Heart left ventricle (tissue), 16 donors: ENCODE measurements at regions of chr18 and their contacts with region 1.

Region 1: DNA sequence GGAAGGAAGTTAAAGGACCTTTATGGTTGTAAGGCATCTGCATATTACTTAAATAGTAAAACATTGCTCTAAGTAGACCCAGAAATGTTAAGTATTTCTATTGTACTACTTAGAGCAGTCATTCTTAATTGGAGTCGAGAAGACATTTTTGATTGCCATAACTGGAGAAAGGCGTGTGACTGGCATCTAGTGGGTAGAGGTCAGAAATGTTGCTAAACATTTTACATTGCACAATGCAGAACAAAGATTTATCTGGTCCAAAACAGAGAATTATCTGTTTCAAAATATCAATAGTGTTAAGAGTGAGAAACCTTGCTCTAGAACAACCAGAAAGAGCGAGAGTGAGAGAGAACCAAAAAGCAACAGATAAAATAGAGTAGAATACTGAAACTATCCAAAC is 23.3 kb upstream of the ROCK1 start:
- DNase-seq: no peak
- ATAC-seq: peak in 2 of 4 donors; percentile 51 to 54
- H3K4me3 ChIP-seq: no peak overlapping the region
- H3K27ac ChIP-seq: no peak overlapping the region
- H3K4me1 ChIP-seq: peaks cover 0 to 8% (median 0%) of the 10 kb centered on the region in 12 donors
- H3K27me3 ChIP-seq: no peaks in the 10 kb centered on the region
- CTCF ChIP-seq: peak in 11 of 12 donors; percentile 17 to 58 (median 38)
- POLR2A ChIP-seq: no peak

Region 2: GRCh38 chr18:20971886-20972267 is 163.0 kb before region 1 on chr18:
- intact Hi-C with region 1: loop called in 3 of 10 experiments (anchors 10 kb)
- DNase-seq: no peak
- ATAC-seq: no peak
- H3K4me3 ChIP-seq: no peak overlapping the region
- H3K27ac ChIP-seq: no peak overlapping the region
- H3K4me1 ChIP-seq: no peaks in the 10 kb centered on the region
- H3K27me3 ChIP-seq: no peaks in the 10 kb centered on the region
- CTCF ChIP-seq: peak in 11 of 12 donors; percentile 18 to 51 (median 31)
- POLR2A ChIP-seq: no peak

Region 3: GRCh38 chr18:21012308-21012707 is 122.6 kb before region 1 on chr18:
- intact Hi-C with region 1: loop called in 1 of 10 experiments (anchors 10 kb)
- DNase-seq: no peak
- ATAC-seq: no peak
- H3K4me3 ChIP-seq: no peak overlapping the region
- H3K27ac ChIP-seq: no peak overlapping the region
- H3K4me1 ChIP-seq: no peaks in the 10 kb centered on the region
- H3K27me3 ChIP-seq: no peaks in the 10 kb centered on the region
- CTCF ChIP-seq: no peak
- POLR2A ChIP-seq: no peak

Region 4: DNA sequence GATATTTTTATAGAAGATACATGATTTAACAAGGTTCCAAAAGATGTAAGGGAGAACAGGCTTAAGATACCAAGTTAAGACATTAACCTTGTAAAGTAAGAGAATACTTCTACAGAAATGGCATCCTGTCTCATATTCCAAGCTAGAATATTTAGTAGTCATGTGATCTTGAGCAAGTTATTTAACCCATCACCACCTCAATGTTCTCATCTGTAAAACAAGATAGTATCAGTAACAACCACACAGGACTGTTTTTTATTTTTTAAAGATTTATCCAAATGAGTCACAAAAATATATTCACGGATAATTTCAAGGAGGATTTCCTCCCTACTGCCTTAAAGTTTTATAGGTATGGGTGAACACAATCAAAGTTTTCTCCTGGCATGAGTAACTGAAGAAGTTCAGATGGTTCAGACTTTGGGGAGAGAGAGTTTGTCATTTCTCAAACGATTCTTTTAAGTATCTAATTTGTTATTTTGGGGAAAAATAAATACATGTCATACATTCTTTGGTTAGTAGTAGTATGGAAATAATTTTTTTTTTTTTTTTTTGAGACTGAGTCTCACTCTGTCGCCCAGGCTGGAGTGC is 49.2 kb before region 1 on chr18:
- intact Hi-C with region 1: no loop called
- DNase-seq: no peak
- ATAC-seq: no peak
- H3K4me3 ChIP-seq: no peak overlapping the region
- H3K27ac ChIP-seq: no peak overlapping the region
- H3K4me1 ChIP-seq: peaks cover 0 to 28% (median 0%) of the 10 kb centered on the region in 12 donors
- H3K27me3 ChIP-seq: no peaks in the 10 kb centered on the region
- CTCF ChIP-seq: no peak
- POLR2A ChIP-seq: no peak